ENCODE measurements at regions of chr5 and their contacts with region 1.

Region 1: DNA sequence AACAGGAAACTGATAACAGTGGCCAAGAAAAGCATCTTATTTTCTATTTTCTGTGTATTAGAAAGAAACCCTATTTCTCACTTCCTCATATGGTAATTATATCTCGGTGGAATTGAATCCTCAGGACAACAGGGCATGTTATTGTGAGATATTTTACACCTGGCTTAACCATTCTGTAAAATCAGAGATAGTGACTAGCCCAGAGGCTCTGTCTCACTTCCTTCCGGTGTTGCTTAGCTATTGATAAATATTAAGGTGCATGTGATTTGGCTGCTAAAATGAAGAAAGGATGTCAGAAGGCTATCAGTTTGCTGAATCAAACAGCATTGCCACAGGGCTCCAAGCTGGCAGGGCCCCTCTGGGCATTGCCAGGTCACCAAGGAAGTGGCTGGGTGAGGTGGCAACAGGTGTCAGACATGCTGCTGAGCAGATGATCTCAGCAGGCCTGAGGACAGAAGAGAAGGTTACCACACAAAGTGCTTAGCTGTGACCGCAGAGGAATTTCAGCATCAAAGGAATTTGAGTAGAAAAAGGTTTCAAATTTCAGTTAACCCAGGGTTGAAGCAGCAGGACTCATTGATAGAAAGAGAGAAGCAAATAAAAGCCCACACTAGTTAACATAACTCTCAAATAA is 330.7 kb downstream of the PDE4D start:
- DNase-seq: peak; percentile 91
- ATAC-seq: peak; percentile 89
- H3K4me3 ChIP-seq: peak overlapping the region in 2 of 5 experiments; percentile 8 to 16
- H3K4me3 Mint-ChIP-seq: peak overlapping the region; percentile 68
- H3K27ac ChIP-seq: peak overlapping the region; percentile 97
- H3K27ac Mint-ChIP-seq: peak overlapping the region; percentile 96
- H3K4me1 ChIP-seq: peaks cover 56 to 57% of the 10 kb centered on the region in 2 donors
- H3K4me1 Mint-ChIP-seq: peaks cover 64% of the 10 kb centered on the region
- H3K27me3 ChIP-seq: no peaks in the 10 kb centered on the region
- H3K27me3 Mint-ChIP-seq: no peaks in the 10 kb centered on the region
- CTCF ChIP-seq: no peak

Region 2: DNA sequence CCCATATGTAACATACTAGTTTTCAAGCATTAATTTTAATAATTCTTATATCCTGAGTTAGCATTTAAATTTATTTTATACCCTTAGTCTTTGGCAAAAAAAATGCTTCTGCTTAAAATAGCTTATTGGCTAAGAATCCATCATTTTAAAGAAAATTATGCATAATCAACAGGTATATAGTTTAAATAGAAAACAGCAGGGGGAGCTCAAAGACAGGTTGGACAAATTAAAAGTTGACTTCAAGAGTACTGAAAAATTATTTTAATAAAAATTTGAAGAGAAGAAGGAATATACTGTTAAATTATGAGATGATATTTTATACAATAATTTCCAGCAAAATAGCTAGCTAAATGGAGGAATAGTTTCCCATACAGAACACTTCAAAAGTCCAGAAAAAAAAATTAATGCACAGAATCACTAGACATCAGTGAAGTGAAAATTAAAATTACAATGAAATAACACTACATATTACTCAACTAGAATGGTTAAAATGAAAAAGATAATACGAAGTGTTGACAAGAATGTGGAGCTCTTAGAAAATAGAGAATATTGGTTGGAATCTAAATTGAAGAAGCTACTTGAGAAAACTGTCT is 56.5 kb before region 1 on chr5:
- CTCF ChIA-PET with region 1: interaction called, 4 read pairs
- POLR2A ChIA-PET with region 1: no interaction called
- intact Hi-C with region 1: loop called (anchors 5 kb)
- DNase-seq: peak; percentile 57
- ATAC-seq: no peak
- H3K4me3 ChIP-seq: no peak overlapping the region
- H3K4me3 Mint-ChIP-seq: no peak overlapping the region
- H3K27ac ChIP-seq: no peak overlapping the region
- H3K27ac Mint-ChIP-seq: no peak overlapping the region
- H3K4me1 ChIP-seq: no peaks in the 10 kb centered on the region
- H3K4me1 Mint-ChIP-seq: no peaks in the 10 kb centered on the region
- H3K27me3 ChIP-seq: no peaks in the 10 kb centered on the region
- H3K27me3 Mint-ChIP-seq: no peaks in the 10 kb centered on the region
- CTCF ChIP-seq: peak; percentile 81

Region 3: GRCh38 chr5:59790399-59791125 is 227.7 kb after region 1 on chr5:
- CTCF ChIA-PET with region 1: no interaction called
- POLR2A ChIA-PET with region 1: no interaction called
- intact Hi-C with region 1: loop called (anchors 2 kb)
- DNase-seq: peak; percentile 78
- ATAC-seq: peak; percentile 84
- H3K4me3 ChIP-seq: peak overlapping the region in 2 of 5 experiments; percentile 1 to 48
- H3K4me3 Mint-ChIP-seq: peak overlapping the region; percentile 77
- H3K27ac ChIP-seq: peak overlapping the region; percentile 62 to 83
- H3K27ac Mint-ChIP-seq: peak overlapping the region; percentile 92
- H3K4me1 ChIP-seq: peaks cover 34% of the 10 kb centered on the region in 2 donors
- H3K4me1 Mint-ChIP-seq: peaks cover 60% of the 10 kb centered on the region
- H3K27me3 ChIP-seq: no peaks in the 10 kb centered on the region
- H3K27me3 Mint-ChIP-seq: no peaks in the 10 kb centered on the region
- CTCF ChIP-seq: no peak

Region 4: GRCh38 chr5:60522292-60522905 is 959.5 kb after region 1 on chr5:
- CTCF ChIA-PET with region 1: no interaction called
- POLR2A ChIA-PET with region 1: no interaction called
- intact Hi-C with region 1: loop called (anchors 10 kb)
- DNase-seq: peak; percentile 43
- ATAC-seq: peak; percentile 59
- H3K4me3 ChIP-seq: peak overlapping the region; percentile 39 to 65 (median 58)
- H3K4me3 Mint-ChIP-seq: no peak overlapping the region
- H3K27ac ChIP-seq: peak overlapping the region; percentile 88
- H3K27ac Mint-ChIP-seq: no peak overlapping the region
- H3K4me1 ChIP-seq: peaks cover 45 to 56% of the 10 kb centered on the region in 2 donors
- H3K4me1 Mint-ChIP-seq: peaks cover 37% of the 10 kb centered on the region
- H3K27me3 ChIP-seq: no peaks in the 10 kb centered on the region
- H3K27me3 Mint-ChIP-seq: no peaks in the 10 kb centered on the region
- CTCF ChIP-seq: no peak

Measured in B cell (primary cell).